ENCODE measurements at regions of chr14 and their contacts with region 1.

Region 1: DNA sequence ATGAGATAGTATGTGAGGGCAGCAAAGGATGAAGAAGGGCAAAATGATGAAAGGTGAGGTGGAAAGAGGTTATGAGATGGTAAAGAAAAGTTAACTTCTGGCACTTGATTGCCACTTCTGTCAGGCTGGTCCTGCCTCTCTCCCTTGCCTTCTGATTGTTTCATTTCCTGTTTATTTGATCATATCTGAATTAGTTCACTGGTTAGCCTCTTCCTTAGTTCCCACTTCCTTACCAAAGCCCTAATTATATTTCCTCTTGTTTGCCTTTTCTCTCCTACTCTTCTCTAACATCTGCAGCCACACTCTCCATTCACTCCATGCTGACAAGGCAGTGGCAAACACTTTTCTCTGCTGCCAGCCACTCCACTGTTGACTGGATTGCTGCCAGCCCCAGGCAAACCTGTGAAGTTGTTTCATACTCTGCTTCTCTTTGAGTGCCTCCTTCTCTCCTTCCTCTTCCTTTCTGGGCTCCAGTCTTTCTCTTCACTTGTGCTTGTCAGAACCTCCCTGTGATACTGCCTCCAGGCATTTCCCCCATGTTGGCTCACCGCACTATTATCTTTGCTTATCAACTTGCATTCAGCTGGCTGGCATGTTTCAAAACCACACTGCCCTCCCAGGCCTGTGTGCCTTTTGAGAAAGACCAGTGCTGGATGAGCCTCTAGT is 8.1 kb downstream of the PNP start:
- DNase-seq: peak in 10 of 14 experiments; percentile 12 to 79 (median 36)
- ATAC-seq: peak; percentile 82
- H3K4me3 ChIP-seq: peak overlapping the region; percentile 21
- H3K4me3 Mint-ChIP-seq: peak overlapping the region; percentile 68
- H3K27ac ChIP-seq: peak overlapping the region; percentile 53 to 71
- H3K27ac Mint-ChIP-seq: peak overlapping the region; percentile 87
- H3K4me1 ChIP-seq: peaks cover 80% of the 10 kb centered on the region
- H3K4me1 Mint-ChIP-seq: peaks cover 91% of the 10 kb centered on the region
- H3K27me3 ChIP-seq: no peaks in the 10 kb centered on the region
- H3K27me3 Mint-ChIP-seq: no peaks in the 10 kb centered on the region
- CTCF ChIP-seq: no peak

Region 2: DNA sequence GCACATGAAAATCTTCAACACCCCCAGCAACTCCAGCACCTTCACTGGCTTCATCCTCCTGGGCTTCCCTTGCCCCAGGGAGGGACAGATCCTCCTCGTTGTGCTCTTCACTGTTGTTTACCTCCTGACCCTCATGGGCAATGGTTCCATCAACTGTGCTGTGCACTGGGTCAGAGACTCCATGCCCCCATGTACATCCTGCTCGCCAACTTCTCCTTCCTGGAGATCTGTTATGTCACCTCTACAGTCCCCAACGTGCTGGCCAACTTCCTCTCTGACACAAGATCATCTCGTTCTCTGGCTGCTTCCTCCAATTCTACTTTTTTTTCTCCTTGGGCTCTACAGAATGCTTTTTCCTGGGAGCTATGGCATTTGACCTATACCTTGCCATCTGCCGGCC is 298.1 kb before region 1 on chr14:
- CTCF ChIA-PET with region 1: no interaction called
- POLR2A ChIA-PET with region 1: no interaction called
- intact Hi-C with region 1: no loop called
- DNase-seq: peak in 3 of 14 experiments; percentile 6 to 21 (median 7)
- ATAC-seq: no peak
- H3K4me3 ChIP-seq: no peak overlapping the region
- H3K4me3 Mint-ChIP-seq: no peak overlapping the region
- H3K27ac ChIP-seq: no peak overlapping the region
- H3K27ac Mint-ChIP-seq: no peak overlapping the region
- H3K4me1 ChIP-seq: no peaks in the 10 kb centered on the region
- H3K4me1 Mint-ChIP-seq: no peaks in the 10 kb centered on the region
- H3K27me3 ChIP-seq: no peaks in the 10 kb centered on the region
- H3K27me3 Mint-ChIP-seq: peaks cover 8% of the 10 kb centered on the region
- CTCF ChIP-seq: no peak

Region 3: DNA sequence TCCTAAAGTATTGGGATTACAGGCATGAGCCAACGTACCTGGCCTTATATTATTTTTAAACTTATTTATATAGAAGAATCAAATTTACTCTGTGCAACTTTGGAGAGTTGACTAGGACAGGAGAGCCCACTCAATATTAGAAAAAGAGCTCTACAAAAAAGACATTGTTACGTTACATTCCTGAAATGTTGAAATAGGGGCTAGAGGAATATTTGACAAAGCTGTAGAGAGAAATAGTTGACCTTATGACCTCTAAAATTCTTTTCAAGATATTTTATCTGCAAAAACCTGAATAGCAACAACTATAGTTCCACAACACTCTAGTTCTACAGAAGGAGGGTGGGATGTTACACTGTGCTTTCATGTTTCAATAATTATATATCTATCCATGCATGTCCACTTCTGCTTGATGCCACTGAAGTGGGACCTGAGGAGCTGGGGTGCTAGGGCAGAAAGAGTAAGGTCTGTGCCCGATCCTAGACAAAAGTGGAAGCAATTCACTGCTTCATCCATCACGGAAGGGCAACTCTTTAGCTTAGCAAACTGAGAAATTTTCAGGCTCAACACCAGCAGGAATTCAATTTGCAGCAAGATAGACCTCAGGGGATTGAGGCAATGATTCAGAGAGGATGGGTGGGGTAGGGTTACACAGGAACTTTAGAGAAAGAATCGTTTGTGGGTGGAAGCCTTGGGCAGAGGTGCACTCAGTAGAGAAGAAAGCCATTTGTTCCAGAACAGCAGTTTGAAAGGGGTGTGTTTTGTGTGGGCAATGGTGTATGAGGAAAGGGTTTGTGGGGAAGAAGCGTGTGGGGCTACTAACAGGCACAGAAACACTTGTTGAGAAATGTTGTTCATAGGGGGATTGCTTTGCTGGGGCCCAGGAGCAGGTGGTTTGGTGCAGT is 12.0 kb after region 1 on chr14:
- CTCF ChIA-PET with region 1: interaction called, 4 read pairs
- POLR2A ChIA-PET with region 1: interaction called, 50 read pairs
- intact Hi-C with region 1: loop called in 1 of 2 experiments (anchors 2 kb)
- DNase-seq: peak in 6 of 14 experiments; percentile 10 to 58 (median 14)
- ATAC-seq: peak; percentile 83
- H3K4me3 ChIP-seq: no peak overlapping the region
- H3K4me3 Mint-ChIP-seq: peak overlapping the region; percentile 69
- H3K27ac ChIP-seq: peak overlapping the region in 1 of 2 donors; percentile 19
- H3K27ac Mint-ChIP-seq: peak overlapping the region; percentile 84
- H3K4me1 ChIP-seq: peaks cover 58% of the 10 kb centered on the region
- H3K4me1 Mint-ChIP-seq: peaks cover 83% of the 10 kb centered on the region
- H3K27me3 ChIP-seq: no peaks in the 10 kb centered on the region
- H3K27me3 Mint-ChIP-seq: no peaks in the 10 kb centered on the region
- CTCF ChIP-seq: no peak

Region 4: DNA sequence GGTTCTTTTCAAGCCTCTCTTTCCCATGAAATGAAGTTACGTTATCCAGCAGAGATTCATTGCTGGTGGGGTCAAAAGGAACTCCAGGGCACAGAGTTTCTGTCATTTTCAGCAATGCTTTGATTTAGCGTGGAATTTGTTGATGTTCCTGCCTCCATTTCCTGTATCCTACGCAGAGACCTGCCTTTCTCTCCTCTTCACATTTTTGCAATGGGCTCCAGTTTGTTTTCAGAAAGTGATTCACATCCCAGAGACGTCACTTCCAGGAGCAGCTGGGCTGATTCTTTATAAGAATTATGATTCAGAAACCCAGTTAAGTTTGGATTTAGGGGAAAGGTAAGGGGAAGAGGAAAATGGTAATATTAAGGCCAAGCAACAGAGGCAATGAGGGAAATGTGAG is 39.6 kb after region 1 on chr14:
- CTCF ChIA-PET with region 1: no interaction called
- POLR2A ChIA-PET with region 1: no interaction called
- intact Hi-C with region 1: loop called in 1 of 2 experiments (anchors 5 kb)
- DNase-seq: no peak
- ATAC-seq: no peak
- H3K4me3 ChIP-seq: no peak overlapping the region
- H3K4me3 Mint-ChIP-seq: no peak overlapping the region
- H3K27ac ChIP-seq: no peak overlapping the region
- H3K27ac Mint-ChIP-seq: no peak overlapping the region
- H3K4me1 ChIP-seq: no peaks in the 10 kb centered on the region
- H3K4me1 Mint-ChIP-seq: no peaks in the 10 kb centered on the region
- H3K27me3 ChIP-seq: no peaks in the 10 kb centered on the region
- H3K27me3 Mint-ChIP-seq: no peaks in the 10 kb centered on the region
- CTCF ChIP-seq: no peak